CD14-positive monocyte (primary cell): ENCODE measurements at regions of chr16 and their contacts with region 1.

Region 1: GRCh38 chr16:4846891-4847773 is at the starts of genes GLYR1 and UBN1:
- DNase-seq: peak; percentile 97 to 98 (median 98)
- H3K4me3 ChIP-seq: peak within 1 kb of the TSS; percentile 83 to 93 (median 90)
- H3K4me3 Mint-ChIP-seq: peak within 1 kb of the TSS; percentile 90 to 94
- H3K27ac ChIP-seq: peak within 1 kb of the TSS; percentile 90 to 97
- H3K27ac Mint-ChIP-seq: peak within 1 kb of the TSS; percentile 88 to 96 (median 94)
- H3K4me1 ChIP-seq: peaks cover 42 to 52% of the 10 kb centered on the region in 2 donors
- H3K4me1 Mint-ChIP-seq: peaks cover 52% of the 10 kb centered on the region
- H3K27me3 ChIP-seq: no peaks in the 10 kb centered on the region
- H3K27me3 Mint-ChIP-seq: no peaks in the 10 kb centered on the region
- CTCF ChIP-seq: no peak
- polyA plus RNA-seq, gene GLYR1: 34.2 to 41.9 (median 39.3) TPM
- polyA plus RNA-seq, gene UBN1: 5.3 to 24.5 (median 7.3) TPM

Region 2: DNA sequence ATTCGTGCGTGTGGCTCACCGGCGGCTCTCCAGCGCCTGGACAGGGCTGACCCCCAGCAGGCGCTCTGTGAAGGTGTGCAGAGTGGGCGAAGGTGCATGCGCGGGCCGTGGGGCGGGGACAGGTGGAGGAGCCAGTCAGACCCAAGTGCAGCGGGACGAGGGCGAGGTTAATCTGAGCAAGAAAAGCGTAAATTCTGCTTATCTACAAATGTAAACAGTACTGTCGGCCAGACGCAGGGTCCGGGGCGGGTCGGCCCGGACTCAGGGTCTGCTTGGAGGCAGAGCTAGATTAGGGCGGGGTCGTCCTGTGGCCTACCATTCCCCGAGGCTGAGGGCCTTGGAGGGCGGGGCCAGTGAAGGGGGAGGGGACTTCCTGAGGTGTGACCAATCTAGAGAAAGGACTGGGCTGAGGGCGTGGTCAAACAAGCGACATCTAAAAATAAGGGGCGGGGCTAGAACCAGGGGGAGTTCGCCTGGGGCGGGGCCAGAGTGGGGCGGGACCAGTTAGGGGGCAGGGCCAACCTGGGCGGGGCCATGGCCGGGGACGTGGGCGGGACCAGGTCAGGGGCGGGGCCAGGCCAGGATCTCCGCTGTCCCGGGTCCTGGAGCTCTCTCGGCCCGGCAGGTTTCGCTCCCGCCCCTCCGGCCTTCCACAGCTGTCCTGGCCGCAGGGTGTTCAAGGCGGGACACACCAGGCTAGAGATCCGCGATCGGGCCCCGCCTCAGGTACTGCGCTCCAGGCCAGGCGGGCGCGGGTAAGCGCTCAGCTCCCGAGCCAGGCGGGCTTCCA is 110.8 kb after region 1 on chr16 and contains the start of gene SEC14L5:
- intact Hi-C with region 1: loop called in 1 of 2 experiments (anchors 10 kb)
- DNase-seq: peak; percentile 91 to 95 (median 93)
- H3K4me3 ChIP-seq: peak within 1 kb of the TSS; percentile 27 to 72 (median 34)
- H3K4me3 Mint-ChIP-seq: peak within 1 kb of the TSS; percentile 79 to 91
- H3K27ac ChIP-seq: no peak within 1 kb of the TSS
- H3K27ac Mint-ChIP-seq: peak within 1 kb of the TSS in 6 of 7 donors; percentile 20 to 82 (median 62)
- H3K4me1 ChIP-seq: peaks cover 11 to 17% of the 10 kb centered on the region in 2 donors
- H3K4me1 Mint-ChIP-seq: peaks cover 17% of the 10 kb centered on the region
- H3K27me3 ChIP-seq: peaks cover 0 to 22% of the 10 kb centered on the region in 2 donors
- H3K27me3 Mint-ChIP-seq: peaks cover 20 to 69% (median 27%) of the 10 kb centered on the region in 3 donors
- CTCF ChIP-seq: no peak
- polyA plus RNA-seq, gene SEC14L5: 0.03 TPM in 1 of 3 donors, not detected in the others